OCI-LY7 (cell line): ENCODE measurements at regions of chrX and their contacts with region 1.

Region 1: GRCh38 chrX:131778269-131779218 is 234.7 kb downstream of the OR13H1 start:
- DNase-seq: no peak
- H3K4me3 ChIP-seq: no peak overlapping the region
- H3K27ac ChIP-seq: no peak overlapping the region
- H3K4me1 ChIP-seq: no peaks in the 10 kb centered on the region
- CTCF ChIP-seq: no peak

Region 2: DNA sequence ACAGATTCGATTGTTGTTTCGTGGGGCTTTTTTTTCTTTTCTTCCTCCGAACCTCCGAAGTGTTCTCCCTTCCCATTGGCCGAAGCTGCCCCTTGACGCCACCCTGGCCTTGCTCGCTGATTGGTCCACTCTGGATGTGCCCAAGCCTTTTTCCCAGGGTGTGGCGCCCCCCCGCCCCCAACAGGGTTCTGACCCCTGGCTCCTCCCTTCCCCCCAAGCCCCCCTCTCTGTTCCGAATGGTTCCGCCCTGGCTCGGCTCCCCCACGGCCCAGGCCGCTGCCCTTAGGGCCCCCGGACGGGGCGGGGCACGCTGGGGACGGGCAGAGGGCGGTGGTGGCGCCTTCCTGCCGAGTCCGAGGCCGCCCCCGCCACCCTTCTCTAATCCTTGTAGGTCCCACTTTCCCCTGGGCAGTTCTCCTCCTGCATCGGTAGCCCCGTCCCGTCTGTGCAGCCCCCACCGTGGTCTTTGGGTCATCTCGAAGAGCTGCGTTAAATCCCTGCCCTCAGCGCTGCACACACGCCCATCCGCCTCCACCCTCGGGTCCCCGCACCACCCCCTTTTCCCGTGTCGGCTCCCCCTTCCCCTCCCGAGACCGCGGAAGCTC is 1847.0 kb before region 1 on chrX:
- CTCF ChIA-PET with region 1: no interaction called
- POLR2A ChIA-PET with region 1: no interaction called
- intact Hi-C with region 1: no loop called
- DNase-seq: peak; percentile 81
- H3K4me3 ChIP-seq: peak overlapping the region; percentile 73
- H3K27ac ChIP-seq: peak overlapping the region; percentile 26
- H3K4me1 ChIP-seq: peaks cover 5% of the 10 kb centered on the region
- CTCF ChIP-seq: no peak

Region 3: GRCh38 chrX:131830400-131831184 is 52.0 kb after region 1 on chrX:
- CTCF ChIA-PET with region 1: no interaction called
- POLR2A ChIA-PET with region 1: no interaction called
- intact Hi-C with region 1: no loop called
- DNase-seq: peak; percentile 41
- H3K4me3 ChIP-seq: no peak overlapping the region
- H3K27ac ChIP-seq: no peak overlapping the region
- H3K4me1 ChIP-seq: no peaks in the 10 kb centered on the region
- CTCF ChIP-seq: 0 out of 2 replicates have a peak, but pooled peaks have one; percentile 25

Region 4: DNA sequence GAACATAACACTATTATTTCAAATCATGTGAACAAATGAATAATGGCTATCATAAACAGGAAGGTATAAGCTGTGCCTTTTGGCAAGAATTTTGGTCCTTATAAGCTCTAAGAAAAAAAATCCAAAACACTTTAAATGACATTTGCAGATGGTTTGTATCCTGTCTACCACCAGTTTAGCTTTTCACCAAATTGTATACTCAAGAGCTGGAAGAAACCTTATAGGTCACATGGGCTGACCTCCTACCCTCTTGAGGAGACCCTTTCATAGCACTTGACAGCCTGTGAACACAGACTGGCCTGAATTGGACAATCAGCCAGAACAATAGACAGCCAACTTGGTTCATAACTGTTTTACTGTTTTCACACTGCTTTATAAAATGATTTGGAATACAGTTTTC is 1294.0 kb after region 1 on chrX:
- CTCF ChIA-PET with region 1: no interaction called
- POLR2A ChIA-PET with region 1: interaction called, 10 read pairs
- intact Hi-C with region 1: no loop called
- DNase-seq: no peak
- H3K4me3 ChIP-seq: no peak overlapping the region
- H3K27ac ChIP-seq: no peak overlapping the region
- H3K4me1 ChIP-seq: no peaks in the 10 kb centered on the region
- CTCF ChIP-seq: no peak